Mammary epithelial cell (primary cell): ENCODE measurements at regions of chr5 and their contacts with region 1.

Region 1: DNA sequence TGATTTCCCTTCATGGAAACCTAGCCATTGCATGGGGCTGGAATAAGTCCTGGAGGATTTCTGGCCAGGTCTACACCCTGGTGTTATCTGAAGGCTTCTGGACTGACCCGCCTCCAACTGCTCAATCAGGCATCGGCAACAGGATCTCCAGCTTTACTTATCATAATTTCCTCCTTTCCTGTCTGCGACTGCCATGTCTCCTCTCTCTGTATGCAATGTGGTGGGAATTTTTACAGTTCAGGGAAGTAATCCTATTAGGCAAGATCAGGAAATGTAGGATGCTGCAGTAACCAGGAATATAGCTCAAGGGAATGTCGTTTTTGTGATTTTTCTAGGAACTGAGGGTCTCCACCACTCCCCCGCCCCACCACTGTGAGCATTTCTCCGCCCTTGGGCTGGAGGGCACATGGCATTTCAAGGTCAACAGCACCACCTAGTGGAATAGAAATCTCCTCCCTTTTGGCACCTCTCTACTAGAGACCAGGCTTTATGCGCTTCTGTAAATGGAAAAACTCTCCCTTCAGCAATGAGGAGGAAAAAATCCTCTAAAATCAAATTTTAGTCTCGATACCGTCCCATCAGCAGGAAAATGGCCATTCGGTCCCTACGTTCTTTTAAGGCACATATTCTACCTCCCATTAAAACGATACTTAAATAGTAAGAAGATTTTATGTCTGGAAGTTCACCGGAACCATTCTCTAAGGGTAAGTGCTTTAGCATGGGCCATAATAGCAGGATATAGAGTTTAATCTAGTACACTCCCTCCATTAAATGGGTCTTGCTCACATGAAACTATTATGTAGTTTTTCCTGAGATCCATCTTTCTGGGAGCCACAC is 93.0 kb downstream of the YTHDC2 start:
- DNase-seq: peak; percentile 38
- H3K4me3 ChIP-seq: no peak overlapping the region
- H3K27ac ChIP-seq: no peak overlapping the region
- H3K4me1 ChIP-seq: peaks cover 10% of the 10 kb centered on the region
- H3K27me3 ChIP-seq: no peaks in the 10 kb centered on the region
- CTCF ChIP-seq: peak; percentile 70 to 80

Region 2: DNA sequence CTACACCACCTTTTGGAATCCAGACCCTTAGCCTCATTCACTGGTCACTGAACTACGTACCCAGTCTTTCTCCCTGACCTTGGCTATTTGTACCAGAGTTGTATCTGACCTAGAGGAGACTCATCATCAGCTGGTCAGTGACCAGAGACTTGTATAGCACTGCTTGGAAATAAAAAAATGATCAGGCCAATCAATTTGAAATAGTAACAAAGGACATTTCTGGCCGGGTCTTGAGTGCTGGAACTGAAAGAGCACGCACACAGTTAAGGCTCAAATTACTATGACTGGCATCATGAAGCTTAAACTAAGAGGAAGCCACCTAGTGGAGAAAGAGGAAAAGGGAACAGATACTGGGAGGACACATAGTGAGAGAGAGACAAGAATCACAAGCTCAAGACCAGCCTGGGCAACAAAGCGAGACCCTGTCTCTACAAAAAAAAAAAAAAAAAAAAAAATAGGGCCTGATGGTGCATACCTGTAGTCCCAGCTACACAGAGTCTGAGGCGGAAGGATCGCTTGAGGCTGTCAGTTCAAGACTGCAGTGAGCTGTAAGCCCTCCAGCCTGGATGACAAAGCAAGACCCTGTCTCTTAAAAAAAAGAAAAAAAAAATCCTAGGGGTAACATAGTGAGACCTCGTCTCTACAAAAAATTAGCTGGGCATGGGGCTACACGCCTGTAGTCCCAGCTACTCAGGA is 758.3 kb before region 1 on chr5:
- CTCF ChIA-PET with region 1: no interaction called
- dilution Hi-C with region 1: no loop called
- in situ Hi-C with region 1: no loop called
- intact Hi-C with region 1: loop called (anchors 10 kb)
- DNase-seq: peak; percentile 57
- H3K4me3 ChIP-seq: no peak overlapping the region
- H3K27ac ChIP-seq: no peak overlapping the region
- H3K4me1 ChIP-seq: no peaks in the 10 kb centered on the region
- H3K27me3 ChIP-seq: no peaks in the 10 kb centered on the region
- CTCF ChIP-seq: peak; percentile 73 to 76

Region 3: DNA sequence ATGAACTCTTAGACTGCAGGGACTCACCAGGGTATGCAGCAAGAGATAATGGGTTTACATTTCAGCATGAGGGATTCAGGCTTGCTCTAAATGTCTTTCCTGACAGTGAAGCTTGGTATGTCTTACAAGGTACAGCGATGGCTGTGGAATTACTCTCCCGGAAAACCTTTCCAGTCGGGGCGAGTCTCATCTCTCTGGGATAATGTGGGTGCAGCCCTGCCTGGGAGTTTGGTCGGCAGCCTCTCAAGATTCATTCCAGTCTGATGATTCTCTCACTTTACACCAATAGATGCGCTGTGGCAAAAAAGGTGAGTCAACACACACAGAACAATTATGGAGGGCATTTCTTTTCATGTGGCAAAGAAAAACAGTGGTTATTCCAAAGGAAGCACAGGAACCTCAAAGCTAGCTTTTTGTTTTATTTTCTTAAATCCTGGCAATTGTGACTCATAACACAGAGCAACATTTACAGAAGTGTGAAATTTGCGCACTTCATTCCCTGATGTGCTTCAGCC is 439.6 kb before region 1 on chr5:
- CTCF ChIA-PET with region 1: no interaction called
- dilution Hi-C with region 1: no loop called
- in situ Hi-C with region 1: no loop called
- intact Hi-C with region 1: no loop called
- DNase-seq: peak; percentile 97
- H3K4me3 ChIP-seq: no peak overlapping the region
- H3K27ac ChIP-seq: peak overlapping the region; percentile 74
- H3K4me1 ChIP-seq: peaks cover 75% of the 10 kb centered on the region
- H3K27me3 ChIP-seq: no peaks in the 10 kb centered on the region
- CTCF ChIP-seq: no peak

Region 4: DNA sequence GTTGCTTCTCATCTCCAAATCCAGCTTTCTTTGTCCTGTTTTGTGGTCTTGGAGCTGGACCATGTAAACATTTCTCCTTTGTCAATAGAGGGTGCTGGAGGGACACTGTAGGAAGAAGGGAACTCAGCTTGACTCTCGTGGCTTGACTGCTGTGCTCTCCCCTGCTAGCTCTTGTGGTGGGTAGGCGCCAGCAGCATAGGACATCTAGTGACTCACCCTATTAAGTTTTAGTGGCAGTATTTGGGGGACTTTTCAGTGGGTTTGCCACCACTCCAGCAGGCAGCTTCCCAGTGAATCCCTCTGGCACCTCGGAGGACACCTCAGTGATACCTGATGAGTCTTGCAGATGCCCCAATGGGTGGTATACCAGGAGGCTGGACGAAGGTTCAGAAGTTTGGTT is 269.5 kb before region 1 on chr5:
- CTCF ChIA-PET with region 1: no interaction called
- dilution Hi-C with region 1: no loop called
- in situ Hi-C with region 1: no loop called
- intact Hi-C with region 1: loop called (anchors 1 kb)
- DNase-seq: peak; percentile 58
- H3K4me3 ChIP-seq: no peak overlapping the region
- H3K27ac ChIP-seq: no peak overlapping the region
- H3K4me1 ChIP-seq: no peaks in the 10 kb centered on the region
- H3K27me3 ChIP-seq: no peaks in the 10 kb centered on the region
- CTCF ChIP-seq: peak; percentile 38 to 59

Region 5: DNA sequence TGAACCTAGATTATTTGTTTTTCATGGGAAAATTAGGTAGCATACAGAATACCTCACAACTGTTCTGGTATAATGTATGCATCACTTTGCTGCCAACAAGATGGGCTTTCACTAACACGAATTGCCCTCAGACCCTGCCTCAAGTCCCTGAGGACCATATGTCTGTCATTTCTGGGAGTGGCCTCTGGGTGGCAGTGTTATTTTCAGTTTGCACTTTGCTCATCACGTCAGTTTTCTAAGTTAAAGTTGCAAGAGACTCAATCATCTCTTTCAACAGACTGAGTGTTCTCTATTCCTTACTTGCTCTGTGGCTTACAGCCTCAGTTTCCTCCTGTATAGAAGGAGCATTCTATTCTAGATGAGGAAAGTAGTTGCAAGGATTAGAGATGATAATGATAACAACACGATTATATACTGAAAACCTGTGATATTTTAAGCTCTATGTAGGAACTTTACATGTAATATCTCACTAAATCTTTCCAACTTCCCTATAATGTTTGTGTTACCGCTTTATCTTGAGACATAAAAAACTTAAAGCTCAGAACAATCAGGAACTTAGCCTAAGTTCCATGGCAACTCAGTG is 227.5 kb before region 1 on chr5:
- CTCF ChIA-PET with region 1: no interaction called
- dilution Hi-C with region 1: no loop called
- in situ Hi-C with region 1: no loop called
- intact Hi-C with region 1: loop called (anchors 1 kb)
- DNase-seq: peak; percentile 50
- H3K4me3 ChIP-seq: no peak overlapping the region
- H3K27ac ChIP-seq: no peak overlapping the region
- H3K4me1 ChIP-seq: peaks cover 44% of the 10 kb centered on the region
- H3K27me3 ChIP-seq: no peaks in the 10 kb centered on the region
- CTCF ChIP-seq: peak; percentile 76 to 79

Region 6: DNA sequence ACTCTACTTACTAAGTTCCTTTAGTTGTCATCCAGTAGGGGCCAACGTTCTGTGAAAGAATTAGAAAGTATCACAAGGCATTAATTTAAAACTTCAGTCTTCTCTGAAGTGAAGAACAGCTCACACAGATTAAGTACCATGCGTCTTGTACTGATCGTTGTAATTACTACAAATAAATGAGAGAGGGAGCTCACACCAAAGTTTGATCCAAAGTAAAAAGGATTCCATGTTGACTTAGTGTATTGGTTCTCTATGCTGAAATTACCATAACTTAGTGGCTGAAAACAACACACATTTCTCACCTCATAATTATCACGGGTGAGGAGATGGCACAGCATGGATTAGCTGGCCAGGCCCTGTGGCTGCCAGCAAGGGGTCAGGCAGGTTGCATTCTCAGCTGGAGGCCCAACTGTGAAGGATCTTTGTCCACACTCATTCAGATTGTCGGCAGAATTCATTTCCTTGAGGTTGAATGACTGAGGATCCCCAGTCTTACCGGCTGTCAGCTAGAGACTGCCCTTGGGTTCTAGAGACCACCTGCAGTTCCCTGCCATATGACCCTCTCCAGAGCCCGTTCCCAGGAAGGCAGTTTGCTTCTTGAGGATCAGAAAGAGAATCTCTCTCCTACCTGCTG is 76.1 kb after region 1 on chr5:
- CTCF ChIA-PET with region 1: no interaction called
- dilution Hi-C with region 1: no loop called
- in situ Hi-C with region 1: no loop called
- intact Hi-C with region 1: no loop called
- DNase-seq: no peak
- H3K4me3 ChIP-seq: no peak overlapping the region
- H3K27ac ChIP-seq: no peak overlapping the region
- H3K4me1 ChIP-seq: no peaks in the 10 kb centered on the region
- H3K27me3 ChIP-seq: no peaks in the 10 kb centered on the region
- CTCF ChIP-seq: no peak